OCI-LY7 (cell line): ENCODE measurements at regions of chr1 and their contacts with region 1.

Region 1: DNA sequence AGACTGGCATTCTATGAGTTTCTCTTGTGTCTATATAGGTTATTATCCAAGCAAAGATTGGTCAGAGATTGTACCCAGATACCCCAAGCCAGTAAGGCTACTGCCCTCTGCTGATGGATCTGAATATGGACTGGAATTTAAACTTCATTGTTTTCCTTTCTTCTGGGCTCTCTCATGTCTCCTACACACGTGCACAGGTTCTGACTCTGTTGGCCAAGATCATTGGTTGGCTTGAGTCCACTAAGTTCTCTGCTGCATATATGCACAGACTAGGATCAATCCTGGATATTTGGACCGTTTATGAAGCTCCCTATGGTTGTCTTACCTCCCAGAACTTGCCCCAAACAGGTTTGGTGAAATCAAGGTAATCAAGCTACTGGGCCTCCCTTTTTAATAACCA is 69.7 kb downstream of the CC2D1B start:
- DNase-seq: peak; percentile 41
- H3K4me3 ChIP-seq: no peak overlapping the region
- H3K27ac ChIP-seq: no peak overlapping the region
- H3K4me1 ChIP-seq: no peaks in the 10 kb centered on the region
- CTCF ChIP-seq: peak; percentile 87

Region 2: GRCh38 chr1:52127181-52128180 is 168.9 kb before region 1 on chr1:
- CTCF ChIA-PET with region 1: no interaction called
- POLR2A ChIA-PET with region 1: no interaction called
- intact Hi-C with region 1: loop called (anchors 2 kb)
- DNase-seq: peak; percentile 43
- H3K4me3 ChIP-seq: no peak overlapping the region
- H3K27ac ChIP-seq: no peak overlapping the region
- H3K4me1 ChIP-seq: no peaks in the 10 kb centered on the region
- CTCF ChIP-seq: peak; percentile 81

Region 3: DNA sequence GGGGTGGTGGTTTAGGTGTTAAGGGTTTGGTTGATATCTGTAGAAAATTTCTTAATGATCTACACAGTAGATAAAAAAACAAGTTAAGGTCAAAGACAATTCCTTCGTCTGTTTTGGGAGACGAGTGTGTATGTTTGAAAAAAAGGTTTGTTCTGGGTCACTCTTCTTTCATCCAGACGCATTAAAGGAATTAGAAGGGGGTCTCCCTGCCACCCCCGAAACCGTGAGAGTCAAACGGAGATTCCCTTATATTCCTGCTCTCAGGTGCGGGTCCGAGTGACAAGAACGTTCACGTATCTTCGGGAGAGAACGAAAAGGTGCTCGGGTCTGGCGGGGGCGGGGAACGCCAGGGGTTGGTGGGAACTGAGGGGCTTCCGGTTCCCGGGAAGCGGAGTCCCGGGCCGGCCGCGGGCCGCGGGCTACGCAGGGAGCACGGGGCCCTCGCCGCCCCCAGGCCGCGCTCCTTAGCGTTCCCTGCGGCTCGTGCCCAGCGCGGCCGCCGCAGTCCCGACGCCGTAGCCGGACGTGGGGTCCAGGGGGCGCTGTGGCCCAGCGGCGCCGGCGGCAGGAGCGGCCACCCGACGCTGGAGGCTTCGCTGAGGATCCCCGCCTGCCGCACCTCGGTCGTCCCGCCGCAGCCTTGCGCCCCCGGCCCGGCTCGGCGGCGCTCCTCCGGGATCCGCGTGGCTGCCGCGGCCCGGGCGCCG is 154.7 kb before region 1 on chr1 and contains the start of gene ZFYVE9:
- CTCF ChIA-PET with region 1: no interaction called
- POLR2A ChIA-PET with region 1: no interaction called
- intact Hi-C with region 1: loop called (anchors 5 kb)
- DNase-seq: peak; percentile 90
- H3K4me3 ChIP-seq: peak within 1 kb of the TSS; percentile 73
- H3K27ac ChIP-seq: peak within 1 kb of the TSS; percentile 70
- H3K4me1 ChIP-seq: peaks cover 38% of the 10 kb centered on the region
- CTCF ChIP-seq: peak; percentile 69
- total RNA-seq, gene ZFYVE9: 5.6 and 9.4 TPM in 2 replicates

Region 4: GRCh38 chr1:52235646-52236045 is 60.7 kb before region 1 on chr1:
- CTCF ChIA-PET with region 1: no interaction called
- POLR2A ChIA-PET with region 1: no interaction called
- intact Hi-C with region 1: no loop called
- DNase-seq: no peak
- H3K4me3 ChIP-seq: no peak overlapping the region
- H3K27ac ChIP-seq: no peak overlapping the region
- H3K4me1 ChIP-seq: no peaks in the 10 kb centered on the region
- CTCF ChIP-seq: no peak

Region 5: GRCh38 chr1:52368383-52369172 is 72.2 kb after region 1 on chr1:
- CTCF ChIA-PET with region 1: no interaction called
- POLR2A ChIA-PET with region 1: no interaction called
- intact Hi-C with region 1: no loop called
- DNase-seq: no peak
- H3K4me3 ChIP-seq: no peak overlapping the region
- H3K27ac ChIP-seq: no peak overlapping the region
- H3K4me1 ChIP-seq: peaks cover 15% of the 10 kb centered on the region
- CTCF ChIP-seq: no peak

Region 6: DNA sequence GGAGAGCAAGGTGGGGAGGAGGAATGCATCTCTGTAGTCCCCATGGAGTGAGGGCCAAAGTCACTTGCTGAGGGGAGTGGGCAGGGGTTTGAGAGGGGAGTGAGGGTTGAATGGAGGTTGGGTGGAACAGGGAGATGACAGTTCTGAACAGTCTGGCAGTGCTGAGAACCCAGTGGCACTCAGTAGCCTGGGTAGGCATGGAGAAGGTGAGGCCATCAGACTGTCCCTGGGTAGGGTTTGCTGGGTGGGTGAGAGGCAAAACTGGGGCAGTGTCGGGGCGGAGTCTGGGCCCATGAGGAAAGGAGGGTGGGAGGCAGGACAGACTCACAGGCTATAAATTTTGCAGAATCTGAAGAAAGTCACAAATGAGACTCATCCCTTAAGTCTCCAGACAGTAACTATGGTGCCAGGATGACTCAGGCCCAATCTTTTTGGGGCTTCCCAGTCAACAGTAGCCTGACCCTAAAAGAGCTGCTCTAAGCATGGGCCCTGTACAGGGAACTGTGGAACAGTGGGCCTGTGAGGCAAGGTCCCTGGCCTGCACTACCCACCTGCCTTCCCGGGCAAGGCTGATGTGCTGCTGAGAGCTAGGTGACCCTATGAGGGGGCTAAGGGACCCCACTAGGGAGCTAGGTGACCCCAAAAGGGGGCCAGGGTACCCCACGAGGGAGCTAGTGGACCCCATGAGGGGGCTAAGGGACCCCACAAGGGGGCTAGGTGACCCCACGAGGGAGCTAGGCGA is 1111.8 kb after region 1 on chr1:
- CTCF ChIA-PET with region 1: no interaction called
- POLR2A ChIA-PET with region 1: no interaction called
- intact Hi-C with region 1: no loop called
- DNase-seq: no peak
- H3K4me3 ChIP-seq: no peak overlapping the region
- H3K27ac ChIP-seq: no peak overlapping the region
- H3K4me1 ChIP-seq: no peaks in the 10 kb centered on the region
- CTCF ChIP-seq: no peak